Mammary epithelial cell (primary cell): ENCODE measurements at regions of chrX and their contacts with region 1.

Region 1: DNA sequence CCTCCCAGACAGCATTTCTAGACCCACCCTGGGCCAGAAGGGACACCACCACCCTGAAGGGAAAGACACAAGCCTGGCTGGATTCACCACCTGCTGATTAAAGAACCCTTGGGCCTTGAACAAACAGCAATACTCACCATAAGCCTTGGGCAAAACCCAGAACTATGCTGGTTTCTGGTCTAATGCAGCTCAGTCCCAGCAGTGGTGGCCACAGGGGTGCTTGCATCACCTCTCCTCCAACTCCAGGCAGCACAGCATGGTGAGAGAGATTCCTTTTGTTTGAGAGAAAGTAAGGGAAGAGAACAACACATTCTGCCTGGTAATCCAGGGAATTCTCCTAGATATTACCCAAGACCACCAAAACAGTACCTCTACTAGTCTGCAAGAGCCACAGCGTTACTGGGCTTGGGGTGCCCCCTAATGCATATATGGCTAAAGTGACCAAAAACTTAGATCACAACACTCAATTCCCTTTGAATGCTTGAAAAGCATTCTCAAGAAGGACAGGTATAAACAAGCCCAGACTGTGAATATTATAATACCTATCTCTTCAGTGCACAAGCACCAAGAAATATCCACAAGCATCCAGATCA is 25.7 kb downstream of the RNF128 start:
- DNase-seq: peak; percentile 35
- H3K4me3 ChIP-seq: no peak overlapping the region
- H3K27ac ChIP-seq: peak overlapping the region; percentile 7
- H3K4me1 ChIP-seq: peaks cover 9% of the 10 kb centered on the region
- H3K27me3 ChIP-seq: no peaks in the 10 kb centered on the region
- CTCF ChIP-seq: peak in 1 of 2 donors; percentile 40

Region 2: GRCh38 chrX:106415276-106415895 is 336.8 kb before region 1 on chrX:
- CTCF ChIA-PET with region 1: no interaction called
- dilution Hi-C with region 1: no loop called
- in situ Hi-C with region 1: no loop called
- intact Hi-C with region 1: loop called (anchors 1 kb)
- DNase-seq: peak; percentile 6
- H3K4me3 ChIP-seq: no peak overlapping the region
- H3K27ac ChIP-seq: no peak overlapping the region
- H3K4me1 ChIP-seq: no peaks in the 10 kb centered on the region
- H3K27me3 ChIP-seq: peaks cover 11% of the 10 kb centered on the region
- CTCF ChIP-seq: peak; percentile 78

Region 3: GRCh38 chrX:106481341-106481740 is 270.8 kb before region 1 on chrX:
- CTCF ChIA-PET with region 1: no interaction called
- dilution Hi-C with region 1: no loop called
- in situ Hi-C with region 1: no loop called
- intact Hi-C with region 1: loop called (anchors 1 kb)
- DNase-seq: peak; percentile 42
- H3K4me3 ChIP-seq: no peak overlapping the region
- H3K27ac ChIP-seq: no peak overlapping the region
- H3K4me1 ChIP-seq: no peaks in the 10 kb centered on the region
- H3K27me3 ChIP-seq: peaks cover 5% of the 10 kb centered on the region
- CTCF ChIP-seq: peak; percentile 79 to 81